ENCODE measurements at regions of chr15 and their contacts with region 1.

Region 1: DNA sequence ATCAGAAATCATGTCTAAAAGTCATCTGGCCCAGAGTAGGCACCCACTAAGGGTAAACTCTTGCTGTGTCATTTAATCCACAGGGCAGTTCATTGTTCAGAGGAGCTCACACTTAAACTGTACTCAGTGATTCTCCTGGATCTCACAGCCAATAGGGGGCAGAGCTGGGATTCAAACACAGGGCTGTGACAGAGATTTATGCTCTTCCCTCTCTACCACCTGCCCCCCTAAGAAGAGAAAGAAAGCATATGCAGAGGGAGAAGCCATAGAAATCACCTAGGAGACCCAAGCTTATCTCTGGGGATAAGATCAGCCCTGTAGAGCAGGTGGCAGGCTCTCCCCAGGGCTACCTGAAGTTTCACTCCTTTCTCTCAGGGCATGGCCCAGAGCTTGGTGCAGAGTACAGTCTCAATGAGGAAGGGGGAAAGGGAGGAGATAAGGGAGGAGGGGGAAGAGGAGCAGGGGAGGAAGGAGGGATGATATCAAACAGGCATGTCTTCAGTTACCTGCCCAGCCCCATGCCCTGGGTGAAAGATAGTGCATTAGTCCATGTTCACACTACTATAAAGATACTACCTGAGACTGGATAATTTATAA is 51.8 kb upstream of the ADPGK start:
- DNase-seq: no peak
- ATAC-seq: no peak
- H3K4me3 ChIP-seq: no peak overlapping the region
- H3K27ac ChIP-seq: no peak overlapping the region
- H3K4me1 ChIP-seq: no peaks in the 10 kb centered on the region
- H3K27me3 ChIP-seq: peaks cover 16% of the 10 kb centered on the region; the same call in 1 of the 2 replicates
- CTCF ChIP-seq: peak; percentile 46

Region 2: DNA sequence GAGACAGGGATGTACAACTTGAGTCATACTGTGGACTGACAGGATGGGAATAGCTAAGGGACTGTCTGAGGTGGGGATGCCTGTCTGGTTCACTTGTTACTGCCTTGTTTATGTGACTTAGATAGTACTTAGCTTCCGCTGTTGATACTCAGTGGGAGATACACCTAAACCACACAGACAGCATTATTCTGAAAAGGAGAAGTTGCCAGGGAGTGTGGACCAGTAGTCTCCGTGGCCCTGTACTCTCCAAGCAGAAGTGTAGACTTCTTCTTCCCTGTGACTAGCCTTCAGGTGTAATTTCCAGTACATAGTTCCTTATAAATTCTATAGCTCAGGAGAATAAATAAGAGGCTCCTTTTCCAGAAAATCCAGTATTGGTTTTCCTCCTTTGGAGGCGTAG is 154.5 kb before region 1 on chr15:
- CTCF ChIA-PET with region 1: interaction called, 10 read pairs
- POLR2A ChIA-PET with region 1: no interaction called
- in situ Hi-C with region 1: no loop called
- intact Hi-C with region 1: no loop called
- DNase-seq: no peak
- ATAC-seq: no peak
- H3K4me3 ChIP-seq: no peak overlapping the region
- H3K27ac ChIP-seq: no peak overlapping the region
- H3K4me1 ChIP-seq: peaks cover 4% of the 10 kb centered on the region
- H3K27me3 ChIP-seq: no peaks in the 10 kb centered on the region
- CTCF ChIP-seq: no peak